HepG2 (cell line): ENCODE measurements at regions of chr2 and their contacts with region 1.

Region 1: GRCh38 chr2:178193823-178194599 is at the start of gene OSBPL6:
- DNase-seq: peak; percentile 28
- ATAC-seq: peak; percentile 93
- H3K4me3 ChIP-seq: peak within 1 kb of the TSS; percentile 59 to 78 (median 66)
- H3K27ac ChIP-seq: no peak within 1 kb of the TSS
- H3K4me1 ChIP-seq: peaks cover 22% of the 10 kb centered on the region
- H3K27me3 ChIP-seq: peaks cover 8 to 73% of the 10 kb centered on the region in 2 experiments
- CTCF ChIP-seq: peak; percentile 25; the same call in 1 of the 2 replicates
- EP300 ChIP-seq: no peak
- POLR2A ChIP-seq: no peak
- RAD21 ChIP-seq: peak; percentile 40
- total RNA-seq, gene OSBPL6: 0.10 and 0.11 TPM in 2 replicates

Region 2: GRCh38 chr2:178280244-178280852 is 86.3 kb after region 1 on chr2:
- CTCF ChIA-PET with region 1: no interaction called
- POLR2A ChIA-PET with region 1: no interaction called
- in situ Hi-C with region 1: no loop called
- intact Hi-C with region 1: loop called (anchors 5 kb)
- DNase-seq: peak; percentile 53
- ATAC-seq: peak; percentile 19; the same call in 1 of the 3 replicates
- H3K4me3 ChIP-seq: no peak overlapping the region
- H3K27ac ChIP-seq: no peak overlapping the region
- H3K4me1 ChIP-seq: peaks cover 30% of the 10 kb centered on the region
- H3K27me3 ChIP-seq: no peaks in the 10 kb centered on the region
- CTCF ChIP-seq: peak; percentile 65
- EP300 ChIP-seq: no peak
- POLR2A ChIP-seq: no peak
- RAD21 ChIP-seq: no peak